AG04450 (cell line): ENCODE measurements at regions of chr9 and their contacts with region 1.

Region 1: DNA sequence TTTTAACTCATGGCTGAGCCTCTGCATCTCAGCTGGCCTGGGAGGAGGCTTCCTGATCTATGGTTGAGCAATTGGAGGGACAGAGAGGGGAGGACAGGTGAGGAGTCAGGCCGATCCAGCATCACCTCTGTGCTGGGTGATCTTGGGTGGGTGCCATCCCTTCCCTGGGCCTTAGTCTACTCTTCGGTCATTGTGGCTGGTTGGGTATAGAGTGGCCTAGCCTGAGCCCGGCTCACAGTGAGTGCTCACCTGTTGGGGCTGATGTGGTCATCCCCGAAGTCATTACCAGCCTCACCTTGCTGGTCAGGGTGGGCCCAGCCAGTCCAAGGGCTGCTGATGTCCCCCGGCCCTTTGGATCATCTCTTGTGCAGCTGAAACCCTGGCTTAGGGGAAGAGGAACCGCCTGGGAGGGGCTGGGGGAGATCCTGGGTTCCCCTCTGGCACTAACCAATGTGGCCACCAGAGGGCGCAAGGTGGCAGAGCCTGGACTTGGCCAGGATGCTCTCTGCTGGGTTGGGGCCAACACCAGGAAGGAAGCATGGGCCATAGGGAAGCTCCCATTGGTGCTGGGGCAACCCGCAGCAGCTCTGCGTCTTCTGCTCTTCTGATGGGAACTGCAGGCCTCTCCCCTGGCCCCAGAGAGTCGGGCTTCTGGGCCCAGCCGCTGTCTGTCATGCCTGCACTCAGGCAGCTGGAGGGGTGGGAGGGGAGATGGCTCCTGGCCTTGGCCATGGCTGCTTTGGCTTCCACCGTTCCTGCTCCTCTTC is 17.3 kb upstream of the ODF2 start:
- DNase-seq: peak; percentile 56
- H3K4me3 ChIP-seq: no peak overlapping the region
- H3K27ac ChIP-seq: no peak overlapping the region
- H3K27me3 ChIP-seq: no peaks in the 10 kb centered on the region
- CTCF ChIP-seq: peak; percentile 94

Region 2: DNA sequence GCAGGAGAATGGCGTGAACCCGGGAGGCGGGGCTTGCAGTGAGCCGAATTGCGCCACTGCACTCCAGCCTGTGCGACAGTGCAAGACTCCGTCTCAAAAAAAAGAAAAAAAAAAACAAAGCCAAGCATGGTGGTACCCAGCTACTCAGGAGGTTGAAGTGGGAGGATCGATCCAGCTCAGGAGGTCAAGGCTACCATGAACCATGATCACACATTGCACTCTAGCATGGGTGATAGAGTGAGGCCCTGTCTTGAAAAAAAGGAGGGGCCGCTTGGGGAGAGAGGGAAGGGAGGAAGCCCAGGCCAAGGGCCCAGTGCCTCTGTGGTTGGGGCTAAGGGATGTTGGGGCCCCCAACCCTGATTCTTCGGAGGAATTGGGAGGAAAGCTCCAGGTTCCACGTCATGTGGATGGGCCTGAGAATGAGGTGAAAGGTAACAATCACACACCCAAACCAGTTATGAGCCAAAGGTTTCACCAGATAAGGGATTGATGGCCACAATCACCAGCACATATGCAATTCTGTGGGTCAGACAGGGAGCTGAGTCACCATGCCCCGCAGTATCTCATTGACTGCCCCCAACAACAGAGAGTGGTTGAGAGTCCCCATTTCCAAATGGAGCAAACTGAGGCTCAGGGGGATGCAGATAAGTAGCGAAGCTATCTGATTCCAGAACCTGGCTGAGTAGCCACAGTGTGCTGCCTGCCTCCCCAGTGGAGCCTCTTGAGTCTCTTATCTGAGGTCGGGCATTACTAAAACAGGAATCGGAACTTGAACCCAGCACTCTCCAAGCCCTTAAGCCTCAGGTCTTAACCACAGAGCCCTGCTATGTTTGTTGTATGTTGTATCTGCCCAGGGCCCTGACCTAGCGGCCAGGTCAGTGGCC is 141.9 kb before region 1 on chr9:
- CTCF ChIA-PET with region 1: interaction called, 14 read pairs
- POLR2A ChIA-PET with region 1: no interaction called
- DNase-seq: no peak
- H3K4me3 ChIP-seq: no peak overlapping the region
- H3K27ac ChIP-seq: no peak overlapping the region
- H3K27me3 ChIP-seq: no peaks in the 10 kb centered on the region
- CTCF ChIP-seq: no peak

Region 3: GRCh38 chr9:128448746-128449145 is 10.2 kb after region 1 on chr9:
- CTCF ChIA-PET with region 1: interaction called, 17 read pairs
- POLR2A ChIA-PET with region 1: no interaction called
- DNase-seq: no peak
- H3K4me3 ChIP-seq: no peak overlapping the region
- H3K27ac ChIP-seq: no peak overlapping the region
- H3K27me3 ChIP-seq: no peaks in the 10 kb centered on the region
- CTCF ChIP-seq: no peak